ENCODE measurements at regions of chr4 and their contacts with region 1.

Region 1: GRCh38 chr4:173370477-173371291 is at the start of gene SAP30:
- DNase-seq: peak; percentile 88 to 97 (median 91)
- ATAC-seq: peak; percentile 91
- H3K4me3 ChIP-seq: peak within 1 kb of the TSS; percentile 99
- H3K4me3 Mint-ChIP-seq: peak within 1 kb of the TSS; percentile 89 to 100 (median 98)
- H3K27ac ChIP-seq: peak within 1 kb of the TSS; percentile 82
- H3K27ac Mint-ChIP-seq: peak within 1 kb of the TSS; percentile 88 to 99 (median 97)
- H3K4me1 ChIP-seq: peaks cover 5 to 20% of the 10 kb centered on the region in 2 donors
- H3K4me1 Mint-ChIP-seq: peaks cover 14 to 46% (median 18%) of the 10 kb centered on the region in 7 donors
- H3K27me3 ChIP-seq: peaks cover 0 to 10% of the 10 kb centered on the region in 2 donors
- H3K27me3 Mint-ChIP-seq: peaks cover 2 to 29% (median 17%) of the 10 kb centered on the region in 5 donors
- total RNA-seq, gene SAP30: 0.48 to 27.4 (median 1.1) TPM

Region 2: DNA sequence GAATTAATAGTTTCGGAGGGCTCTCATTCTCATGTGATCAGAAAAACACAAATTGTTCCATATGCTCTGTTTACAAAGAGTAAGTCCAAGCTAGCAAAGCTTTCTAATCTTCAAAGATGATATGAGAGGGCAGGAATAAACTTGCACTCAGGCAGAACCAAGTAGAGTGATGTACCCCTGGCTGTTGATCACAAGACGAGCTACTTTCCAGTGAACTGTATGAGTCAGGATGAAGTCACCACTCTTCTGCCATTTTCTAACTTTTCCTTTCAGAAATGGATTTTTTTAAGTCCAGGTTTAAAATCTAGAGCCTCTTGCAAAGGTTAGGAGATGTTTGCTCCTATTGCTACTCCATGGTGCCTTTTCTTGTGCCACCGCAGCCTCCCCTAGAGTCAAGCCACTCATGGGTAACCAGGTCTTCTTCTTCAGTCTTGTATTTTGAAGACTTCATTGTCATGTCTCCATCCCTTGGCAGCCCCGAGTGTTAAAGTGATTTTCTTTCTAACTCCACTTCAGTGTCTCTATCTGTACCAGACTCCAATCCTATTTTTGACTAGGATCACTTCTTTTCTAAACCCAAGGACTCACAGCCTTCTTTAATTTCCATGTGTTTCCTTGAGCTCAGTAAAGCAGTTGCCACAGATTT is 374.0 kb before region 1 on chr4:
- CTCF ChIA-PET with region 1: no interaction called
- POLR2A ChIA-PET with region 1: no interaction called
- intact Hi-C with region 1: no loop called
- DNase-seq: no peak
- ATAC-seq: no peak
- H3K4me3 ChIP-seq: no peak overlapping the region
- H3K4me3 Mint-ChIP-seq: no peak overlapping the region
- H3K27ac ChIP-seq: no peak overlapping the region
- H3K27ac Mint-ChIP-seq: no peak overlapping the region
- H3K4me1 ChIP-seq: no peaks in the 10 kb centered on the region
- H3K4me1 Mint-ChIP-seq: no peaks in the 10 kb centered on the region
- H3K27me3 ChIP-seq: no peaks in the 10 kb centered on the region
- H3K27me3 Mint-ChIP-seq: peaks cover 7 to 24% (median 9%) of the 10 kb centered on the region in 5 donors

Region 3: DNA sequence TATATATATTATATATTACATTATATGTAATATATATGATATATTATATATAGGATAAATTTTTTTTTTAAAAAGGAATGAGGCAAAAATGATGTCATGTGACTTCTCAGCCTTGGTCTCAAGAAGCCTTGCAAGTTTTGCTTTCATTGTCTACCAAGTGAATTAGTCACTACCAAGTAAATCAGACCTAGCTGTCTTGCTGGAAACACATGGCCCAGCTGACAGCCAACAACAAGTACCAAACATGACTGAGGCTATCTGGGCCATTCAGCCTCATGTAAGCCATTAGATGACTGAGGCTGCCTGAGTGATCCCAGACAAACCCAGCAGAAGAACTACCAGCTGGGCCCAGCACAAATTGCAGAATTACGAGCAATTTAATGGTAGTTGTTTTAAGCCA is 114.5 kb after region 1 on chr4:
- CTCF ChIA-PET with region 1: no interaction called
- POLR2A ChIA-PET with region 1: no interaction called
- intact Hi-C with region 1: loop called in 1 of 2 experiments (anchors 2 kb)
- DNase-seq: no peak
- ATAC-seq: no peak
- H3K4me3 ChIP-seq: no peak overlapping the region
- H3K4me3 Mint-ChIP-seq: no peak overlapping the region
- H3K27ac ChIP-seq: no peak overlapping the region
- H3K27ac Mint-ChIP-seq: no peak overlapping the region
- H3K4me1 ChIP-seq: no peaks in the 10 kb centered on the region
- H3K4me1 Mint-ChIP-seq: peaks cover 0 to under 1% (median 0%) of the 10 kb centered on the region in 7 donors
- H3K27me3 ChIP-seq: no peaks in the 10 kb centered on the region
- H3K27me3 Mint-ChIP-seq: peaks cover 0 to 7% (median 0%) of the 10 kb centered on the region in 5 donors

Region 4: GRCh38 chr4:173494013-173494970 is 123.6 kb after region 1 on chr4:
- CTCF ChIA-PET with region 1: no interaction called
- POLR2A ChIA-PET with region 1: no interaction called
- intact Hi-C with region 1: loop called (anchors 1 kb)
- DNase-seq: peak in 8 of 9 donors; percentile 43 to 71 (median 56)
- ATAC-seq: peak; percentile 96
- H3K4me3 ChIP-seq: peak overlapping the region; percentile 44
- H3K4me3 Mint-ChIP-seq: peak overlapping the region; percentile 74 to 92 (median 85)
- H3K27ac ChIP-seq: no peak overlapping the region
- H3K27ac Mint-ChIP-seq: peak overlapping the region in 1 of 9 donors; percentile 50
- H3K4me1 ChIP-seq: peaks cover 3 to 9% of the 10 kb centered on the region in 2 donors
- H3K4me1 Mint-ChIP-seq: peaks cover 9 to 35% (median 15%) of the 10 kb centered on the region in 7 donors
- H3K27me3 ChIP-seq: no peaks in the 10 kb centered on the region
- H3K27me3 Mint-ChIP-seq: peaks cover 40 to 71% (median 50%) of the 10 kb centered on the region in 5 donors

Measured in naive thymus-derived CD4-positive, alpha-beta T cell (primary cell).